ENCODE measurements at regions of chr5 and their contacts with region 1.

Region 1: DNA sequence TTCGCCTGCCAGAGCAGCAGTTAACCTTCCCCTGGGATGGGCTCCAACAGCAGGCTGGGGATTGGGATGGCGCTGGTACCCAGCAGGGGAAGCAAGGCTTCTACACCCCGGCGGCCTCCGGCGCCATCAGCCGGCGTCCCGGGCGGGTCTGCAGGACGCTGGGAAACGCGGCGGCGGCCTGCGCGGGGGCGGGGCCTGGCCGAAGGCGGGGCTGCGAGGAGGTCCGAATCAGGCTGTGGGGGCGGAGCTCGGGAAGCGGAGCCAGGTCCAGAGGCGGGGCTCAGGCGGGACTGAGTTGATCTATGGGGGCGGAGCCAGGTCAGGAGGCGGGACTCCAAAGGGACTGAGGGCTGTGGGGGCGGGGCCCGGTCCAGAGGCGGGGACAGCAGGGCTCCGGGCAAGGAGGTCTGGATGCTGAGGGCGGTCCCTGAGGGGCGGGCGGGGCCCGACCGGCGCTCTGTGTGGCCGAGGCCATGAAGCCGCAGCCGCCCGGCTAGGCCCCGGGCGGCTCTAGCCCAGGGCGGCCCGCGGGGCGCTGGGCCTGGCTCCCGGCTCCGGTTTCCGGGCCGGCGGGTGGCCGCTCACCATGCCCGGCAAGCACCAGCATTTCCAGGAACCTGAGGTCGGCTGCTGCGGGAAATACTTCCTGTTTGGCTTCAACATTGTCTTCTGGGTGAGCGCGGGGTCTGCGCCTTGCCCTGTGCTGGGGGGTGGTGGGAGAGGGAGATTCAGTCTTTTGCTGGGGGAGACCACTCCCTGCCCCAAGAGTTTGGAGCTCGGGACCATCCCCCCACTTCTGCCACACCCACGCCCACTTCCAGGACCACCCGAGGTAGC is at the start of gene TSPAN17:
- H3K4me3 ChIP-seq: peak within 1 kb of the TSS; percentile 64
- H3K27ac ChIP-seq: peak within 1 kb of the TSS; percentile 66
- H3K4me1 ChIP-seq: 0 out of 2 replicates have a peak, but pooled peaks cover 2% of the 10 kb centered on the region
- CTCF ChIP-seq: peak; percentile 39; the same call in 1 of the 2 replicates

Region 2: GRCh38 chr5:176537608-176538504 is 109.4 kb before region 1 on chr5:
- CTCF ChIA-PET with region 1: no interaction called
- POLR2A ChIA-PET with region 1: interaction called, 11 read pairs
- H3K4me3 ChIP-seq: peak overlapping the region; percentile 85
- H3K27ac ChIP-seq: peak overlapping the region; percentile 54
- H3K4me1 ChIP-seq: peaks cover 8% of the 10 kb centered on the region; the same call in 1 of the 2 replicates
- CTCF ChIP-seq: no peak

Region 3: DNA sequence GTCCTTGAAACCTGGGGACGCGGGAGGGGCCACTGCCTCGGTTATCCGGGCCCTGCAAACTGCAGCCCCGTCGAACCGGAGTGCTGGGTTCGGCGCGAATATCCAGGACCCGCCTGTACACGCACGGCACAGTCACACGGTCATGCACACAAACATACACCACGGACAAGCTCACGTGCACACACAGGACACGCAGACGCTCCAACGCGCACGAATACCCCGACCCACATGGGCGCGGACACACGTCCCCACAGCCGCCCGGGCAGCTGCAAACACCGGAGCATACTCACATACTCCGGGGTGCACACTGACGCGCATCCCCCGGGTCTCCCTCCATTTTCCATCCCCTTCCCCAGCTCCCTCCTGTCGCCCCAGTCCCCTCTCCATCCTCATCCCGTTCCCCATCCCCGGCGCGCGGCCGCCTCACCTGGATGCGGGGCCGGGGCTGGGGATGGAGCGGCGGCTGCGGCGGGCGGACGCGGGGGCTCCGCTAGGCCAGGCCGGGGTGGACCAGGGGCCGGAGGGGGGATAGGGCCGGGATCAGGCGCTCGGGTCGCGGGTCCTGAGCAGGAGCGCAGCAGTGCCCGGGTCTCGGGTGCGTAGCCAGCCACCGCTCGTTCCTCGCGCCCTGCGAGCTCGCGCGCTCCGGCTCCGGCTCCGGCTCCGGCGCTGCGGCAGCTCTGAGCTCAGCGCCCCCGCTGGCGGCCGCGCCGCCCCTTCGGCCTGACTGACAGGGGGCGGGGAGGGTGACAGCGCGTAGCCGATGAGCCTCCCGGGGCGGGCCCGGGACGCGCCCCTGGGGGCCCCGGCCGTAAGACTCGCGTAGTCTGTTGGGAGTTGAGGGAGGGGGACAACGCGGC is 17.2 kb before region 1 on chr5 and contains the starts of genes EIF4E1B and SNCB:
- CTCF ChIA-PET with region 1: interaction called, 3 read pairs
- POLR2A ChIA-PET with region 1: interaction called, 10 read pairs
- H3K4me3 ChIP-seq: peak within 1 kb of the TSS; percentile 27
- H3K27ac ChIP-seq: no peak within 1 kb of the TSS
- H3K4me1 ChIP-seq: peaks cover 6% of the 10 kb centered on the region; the same call in 1 of the 2 replicates
- CTCF ChIP-seq: no peak